Psoas muscle (tissue), 8 donors: ENCODE measurements at regions of chr3 and their contacts with region 1.

Region 1: GRCh38 chr3:88058591-88059368 is at the starts of genes CGGBP1 and ZNF654:
- DNase-seq: peak; percentile 97 to 98
- ATAC-seq: peak; percentile 94 to 97 (median 96)
- H3K4me3 ChIP-seq: peak within 1 kb of the TSS; percentile 96
- H3K27ac ChIP-seq: peak within 1 kb of the TSS; percentile 97
- H3K4me1 ChIP-seq: peaks cover 40% of the 10 kb centered on the region
- H3K27me3 ChIP-seq: no peaks in the 10 kb centered on the region
- CTCF ChIP-seq: no peak
- total RNA-seq, gene CGGBP1: 39.1 to 46.2 (median 42.9) TPM
- total RNA-seq, gene ZNF654: 8.8 to 10.7 (median 9.6) TPM

Region 2: DNA sequence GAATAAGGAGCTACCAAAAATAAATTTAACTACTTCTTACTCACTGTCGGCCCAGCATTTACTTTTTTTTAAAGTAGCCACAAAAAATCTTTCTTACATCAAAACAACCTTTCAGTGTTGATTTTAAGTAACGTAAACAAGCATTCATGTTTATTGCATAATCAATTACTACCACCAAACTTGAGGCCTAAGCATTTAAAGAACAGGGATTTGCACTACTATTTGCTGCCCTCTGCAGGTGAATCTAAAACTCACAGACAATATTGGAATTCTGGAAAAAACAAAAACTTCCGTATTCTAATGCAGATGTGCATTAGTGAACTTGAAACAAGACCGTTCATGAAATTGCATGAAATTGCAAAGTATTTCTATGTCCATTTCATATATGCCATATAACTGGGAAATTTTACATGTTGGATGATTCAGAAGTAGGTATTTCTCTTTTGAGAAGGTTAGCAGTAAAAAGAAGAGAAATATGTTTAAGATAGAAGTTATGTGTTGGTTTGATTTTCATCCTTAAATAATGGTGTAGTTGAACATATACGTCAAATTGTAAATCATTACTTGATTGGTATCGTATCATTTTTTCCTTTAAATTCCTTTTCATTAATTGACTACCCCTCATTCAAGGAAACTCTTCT is 55.5 kb before region 1 on chr3:
- intact Hi-C with region 1: no loop called
- DNase-seq: no peak
- ATAC-seq: no peak
- H3K4me3 ChIP-seq: no peak overlapping the region
- H3K27ac ChIP-seq: no peak overlapping the region
- H3K4me1 ChIP-seq: no peaks in the 10 kb centered on the region
- H3K27me3 ChIP-seq: no peaks in the 10 kb centered on the region
- CTCF ChIP-seq: peak; percentile 59

Region 3: GRCh38 chr3:88075072-88075471 is 16.3 kb after region 1 on chr3:
- intact Hi-C with region 1: no loop called
- DNase-seq: no peak
- ATAC-seq: no peak
- H3K4me3 ChIP-seq: no peak overlapping the region
- H3K27ac ChIP-seq: no peak overlapping the region
- H3K4me1 ChIP-seq: peaks cover 10% of the 10 kb centered on the region
- H3K27me3 ChIP-seq: no peaks in the 10 kb centered on the region
- CTCF ChIP-seq: no peak

Region 4: GRCh38 chr3:88149509-88150362 is 91.0 kb after region 1 on chr3 and contains the start of gene C3orf38:
- intact Hi-C with region 1: loop called in 1 of 2 experiments (anchors 5 kb)
- DNase-seq: peak; percentile 92 to 93
- ATAC-seq: peak; percentile 97 to 99 (median 99)
- H3K4me3 ChIP-seq: peak within 1 kb of the TSS; percentile 86
- H3K27ac ChIP-seq: peak within 1 kb of the TSS; percentile 92
- H3K4me1 ChIP-seq: peaks cover 13% of the 10 kb centered on the region
- H3K27me3 ChIP-seq: no peaks in the 10 kb centered on the region
- CTCF ChIP-seq: no peak
- total RNA-seq, gene C3orf38: 9.7 to 14.8 (median 11.7) TPM